CD4-positive, alpha-beta T cell (primary cell): ENCODE measurements at regions of chr5 and their contacts with region 1.

Region 1: DNA sequence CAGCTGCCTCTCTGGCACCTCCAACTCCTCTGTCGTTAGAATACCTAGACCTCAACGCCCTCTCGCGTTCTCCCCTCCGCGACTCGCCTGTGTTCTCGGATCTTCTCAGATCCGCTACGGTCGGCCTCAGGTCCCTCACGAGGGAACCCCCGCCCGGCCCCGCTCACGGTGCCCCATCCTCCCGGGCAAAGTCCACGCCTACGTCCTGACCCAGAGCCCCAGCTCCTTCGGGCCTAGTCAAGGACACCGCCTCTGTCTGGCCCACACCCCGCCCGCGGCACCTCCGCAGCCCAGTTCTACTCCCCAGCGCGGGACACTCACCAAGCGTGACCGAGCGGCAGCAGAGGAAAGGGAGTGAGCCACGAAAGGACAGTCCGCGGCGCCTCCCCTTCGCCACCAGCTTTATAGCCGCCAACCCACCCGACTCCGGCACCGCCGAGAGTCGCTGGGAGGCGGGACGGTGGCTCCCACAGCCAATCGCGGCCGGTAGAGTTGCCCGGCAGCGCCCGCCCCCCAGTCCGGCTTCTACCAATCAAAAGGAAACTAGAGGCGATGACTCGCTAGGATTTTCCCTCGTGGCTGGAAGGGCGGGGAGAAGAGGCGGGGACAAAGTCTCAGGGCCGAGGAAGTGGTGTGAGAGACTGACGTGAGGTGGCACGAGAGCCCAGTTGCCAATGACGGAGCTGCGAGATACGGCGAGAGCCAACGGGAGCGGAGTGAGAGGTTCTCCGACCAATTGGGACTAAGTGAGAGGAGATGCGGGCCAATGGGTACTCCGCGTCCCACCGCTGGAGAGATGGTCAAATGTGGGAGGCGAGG is at the start of gene HMGCS1:
- DNase-seq: peak; percentile 93 to 100 (median 98)
- ATAC-seq: peak; percentile 87
- H3K4me3 ChIP-seq: peak within 1 kb of the TSS; percentile 88
- H3K4me3 Mint-ChIP-seq: peak within 1 kb of the TSS; percentile 95
- H3K27ac ChIP-seq: peak within 1 kb of the TSS; percentile 96 to 97
- H3K27ac Mint-ChIP-seq: peak within 1 kb of the TSS; percentile 88
- H3K4me1 ChIP-seq: peaks cover 16% of the 10 kb centered on the region
- H3K4me1 Mint-ChIP-seq: peaks cover 24% of the 10 kb centered on the region
- H3K27me3 ChIP-seq: no peaks in the 10 kb centered on the region
- H3K27me3 Mint-ChIP-seq: no peaks in the 10 kb centered on the region
- CTCF ChIP-seq: no peak
- total RNA-seq, gene HMGCS1: 43.3 to 52.7 TPM

Region 2: GRCh38 chr5:42566652-42567295 is 746.5 kb before region 1 on chr5:
- CTCF ChIA-PET with region 1: no interaction called
- POLR2A ChIA-PET with region 1: no interaction called
- intact Hi-C with region 1: no loop called
- DNase-seq: no peak
- ATAC-seq: no peak
- H3K4me3 ChIP-seq: no peak overlapping the region
- H3K4me3 Mint-ChIP-seq: no peak overlapping the region
- H3K27ac ChIP-seq: no peak overlapping the region
- H3K27ac Mint-ChIP-seq: no peak overlapping the region
- H3K4me1 ChIP-seq: no peaks in the 10 kb centered on the region
- H3K4me1 Mint-ChIP-seq: no peaks in the 10 kb centered on the region
- H3K27me3 ChIP-seq: no peaks in the 10 kb centered on the region
- H3K27me3 Mint-ChIP-seq: peaks cover 22% of the 10 kb centered on the region
- CTCF ChIP-seq: no peak

Region 3: GRCh38 chr5:42908509-42909488 is 404.4 kb before region 1 on chr5:
- CTCF ChIA-PET with region 1: interaction called, 4 read pairs
- POLR2A ChIA-PET with region 1: interaction called, 34 read pairs
- intact Hi-C with region 1: no loop called
- DNase-seq: peak; percentile 80 to 96 (median 90)
- ATAC-seq: peak; percentile 94
- H3K4me3 ChIP-seq: peak overlapping the region; percentile 68
- H3K4me3 Mint-ChIP-seq: peak overlapping the region; percentile 93
- H3K27ac ChIP-seq: no peak overlapping the region
- H3K27ac Mint-ChIP-seq: peak overlapping the region; percentile 91
- H3K4me1 ChIP-seq: peaks cover 12% of the 10 kb centered on the region
- H3K4me1 Mint-ChIP-seq: peaks cover 24% of the 10 kb centered on the region
- H3K27me3 ChIP-seq: peaks cover 4 to 16% of the 10 kb centered on the region in 2 experiments
- H3K27me3 Mint-ChIP-seq: peaks cover 15% of the 10 kb centered on the region
- CTCF ChIP-seq: peak; percentile 89

Region 4: DNA sequence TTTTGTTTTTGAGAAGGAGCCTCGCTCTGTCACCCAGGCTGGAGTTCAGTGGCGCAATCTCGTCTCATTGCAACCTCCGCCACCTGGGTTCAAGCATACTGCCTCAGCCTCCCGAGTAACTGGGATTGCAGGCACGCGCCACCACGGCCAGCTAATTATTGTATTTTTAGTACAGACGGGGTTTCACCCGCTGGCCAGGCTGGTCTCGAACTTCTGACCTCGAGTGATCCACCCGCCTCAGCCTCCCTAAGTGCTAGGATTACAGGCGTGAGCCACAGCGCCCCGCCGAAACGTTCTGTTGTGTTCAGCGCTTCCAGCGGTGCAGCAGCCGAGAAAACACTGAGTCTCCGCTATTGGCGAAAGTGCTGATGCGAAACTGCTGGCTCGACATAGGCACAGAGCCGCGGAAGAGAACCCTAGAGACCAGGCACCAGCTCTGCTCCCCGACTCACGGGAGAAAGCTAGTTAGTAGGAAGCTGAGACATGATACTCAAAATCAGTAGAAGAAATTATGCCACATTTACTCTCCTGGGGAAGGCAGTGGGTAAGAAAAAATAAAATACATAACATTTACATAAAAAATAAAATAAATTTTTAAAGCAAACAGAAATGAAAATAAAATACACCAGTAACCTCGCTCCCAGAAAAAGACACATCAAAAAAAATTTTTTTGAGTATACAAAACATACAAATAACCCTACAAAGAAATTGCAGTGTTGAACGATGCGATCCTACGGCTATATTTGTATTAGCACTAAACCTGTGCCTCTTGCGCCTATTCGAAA is 304.7 kb before region 1 on chr5:
- CTCF ChIA-PET with region 1: no interaction called
- POLR2A ChIA-PET with region 1: interaction called, 19 read pairs
- intact Hi-C with region 1: no loop called
- DNase-seq: peak; percentile 87 to 97 (median 92)
- ATAC-seq: peak; percentile 63
- H3K4me3 ChIP-seq: peak overlapping the region; percentile 82
- H3K4me3 Mint-ChIP-seq: peak overlapping the region; percentile 92
- H3K27ac ChIP-seq: peak overlapping the region; percentile 91 to 95
- H3K27ac Mint-ChIP-seq: peak overlapping the region; percentile 95
- H3K4me1 ChIP-seq: peaks cover 36% of the 10 kb centered on the region
- H3K4me1 Mint-ChIP-seq: peaks cover 42% of the 10 kb centered on the region
- H3K27me3 ChIP-seq: no peaks in the 10 kb centered on the region
- H3K27me3 Mint-ChIP-seq: no peaks in the 10 kb centered on the region
- CTCF ChIP-seq: no peak

Region 5: DNA sequence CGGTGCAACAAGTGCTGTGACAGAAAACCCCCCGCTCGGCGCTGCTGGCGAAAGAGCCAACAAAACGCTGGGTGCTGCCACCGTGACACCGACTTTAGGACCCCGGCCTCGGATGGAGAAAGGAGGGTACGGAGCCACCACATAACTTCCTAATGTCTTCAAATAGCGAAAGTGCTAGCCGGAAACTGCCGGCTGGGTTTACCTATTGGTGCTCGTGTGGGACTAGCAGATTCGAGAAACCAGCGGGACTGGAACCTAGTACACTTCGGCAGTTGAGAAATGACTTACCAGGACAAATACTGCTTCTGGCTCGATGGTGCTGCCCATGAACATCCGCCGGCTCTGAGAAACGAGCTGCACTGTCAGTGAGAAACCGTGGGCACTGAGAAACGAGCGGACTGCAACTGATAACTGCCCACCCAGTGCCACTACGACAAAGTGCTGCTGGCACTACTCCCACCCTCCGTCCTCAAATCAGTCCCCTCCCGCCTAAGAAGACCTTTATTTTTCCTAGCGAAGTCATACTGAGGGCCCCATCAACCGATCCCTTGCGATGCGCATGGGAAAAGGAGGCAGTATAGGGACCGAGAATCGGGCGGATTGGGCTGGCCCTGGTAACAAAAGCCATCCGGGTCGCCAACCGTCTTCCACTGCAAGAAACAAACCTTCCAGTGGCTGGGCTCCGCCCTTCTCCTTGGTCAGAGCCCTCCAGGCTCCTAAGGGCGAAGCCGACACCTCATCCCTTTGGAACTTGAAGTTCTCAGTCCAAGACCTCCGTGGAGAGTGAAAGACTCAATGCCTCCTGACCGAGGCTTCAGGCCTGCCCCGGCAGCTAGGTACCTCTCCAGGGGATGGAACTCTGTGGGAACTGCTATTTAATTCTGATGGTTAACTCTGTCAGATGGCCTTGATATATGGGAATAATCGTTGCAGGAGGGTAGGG is 246.2 kb before region 1 on chr5:
- CTCF ChIA-PET with region 1: no interaction called
- POLR2A ChIA-PET with region 1: interaction called, 43 read pairs
- intact Hi-C with region 1: loop called in 1 of 2 experiments (anchors 2 kb)
- DNase-seq: peak; percentile 84 to 94 (median 90)
- ATAC-seq: peak; percentile 45
- H3K4me3 ChIP-seq: peak overlapping the region; percentile 78
- H3K4me3 Mint-ChIP-seq: peak overlapping the region; percentile 97
- H3K27ac ChIP-seq: peak overlapping the region; percentile 97 to 98
- H3K27ac Mint-ChIP-seq: peak overlapping the region; percentile 96
- H3K4me1 ChIP-seq: peaks cover 55% of the 10 kb centered on the region
- H3K4me1 Mint-ChIP-seq: peaks cover 49% of the 10 kb centered on the region
- H3K27me3 ChIP-seq: no peaks in the 10 kb centered on the region
- H3K27me3 Mint-ChIP-seq: no peaks in the 10 kb centered on the region
- CTCF ChIP-seq: no peak

Region 6: DNA sequence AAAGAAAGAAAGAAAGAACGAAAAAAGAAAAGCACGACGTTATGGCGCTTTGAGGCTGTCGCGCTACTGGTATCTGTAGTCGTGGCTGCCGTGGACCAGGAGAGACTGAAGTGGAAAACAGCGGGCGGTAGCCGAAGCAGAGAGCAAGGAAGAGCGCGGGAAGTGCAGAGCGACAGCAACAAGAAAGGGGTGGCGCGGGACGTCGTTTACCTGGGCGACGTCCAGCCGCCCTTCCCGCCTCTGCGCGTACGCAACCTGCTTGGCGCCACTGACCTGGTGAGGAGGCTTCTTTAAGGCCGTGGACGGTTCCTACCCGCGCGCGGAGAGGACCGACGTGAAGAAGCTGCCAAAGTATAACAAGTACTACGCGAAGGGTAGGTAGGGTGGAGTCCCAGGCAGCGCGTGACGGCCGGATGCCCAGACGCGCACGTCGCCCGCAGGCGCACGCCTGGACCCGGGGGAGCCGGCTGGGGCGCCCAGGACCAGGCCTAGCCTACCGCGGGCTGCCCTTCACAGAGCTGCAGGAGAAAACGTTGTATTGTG is 83.6 kb after region 1 on chr5:
- CTCF ChIA-PET with region 1: no interaction called
- POLR2A ChIA-PET with region 1: interaction called, 27 read pairs
- intact Hi-C with region 1: loop called in 1 of 2 experiments (anchors 1 kb)
- DNase-seq: peak; percentile 36 to 78 (median 55)
- ATAC-seq: peak; percentile 94
- H3K4me3 ChIP-seq: peak overlapping the region; percentile 86
- H3K4me3 Mint-ChIP-seq: peak overlapping the region; percentile 96
- H3K27ac ChIP-seq: peak overlapping the region; percentile 40 to 45
- H3K27ac Mint-ChIP-seq: peak overlapping the region; percentile 94
- H3K4me1 ChIP-seq: peaks cover 14% of the 10 kb centered on the region
- H3K4me1 Mint-ChIP-seq: peaks cover 32% of the 10 kb centered on the region
- H3K27me3 ChIP-seq: no peaks in the 10 kb centered on the region
- H3K27me3 Mint-ChIP-seq: no peaks in the 10 kb centered on the region
- CTCF ChIP-seq: no peak

Region 7: DNA sequence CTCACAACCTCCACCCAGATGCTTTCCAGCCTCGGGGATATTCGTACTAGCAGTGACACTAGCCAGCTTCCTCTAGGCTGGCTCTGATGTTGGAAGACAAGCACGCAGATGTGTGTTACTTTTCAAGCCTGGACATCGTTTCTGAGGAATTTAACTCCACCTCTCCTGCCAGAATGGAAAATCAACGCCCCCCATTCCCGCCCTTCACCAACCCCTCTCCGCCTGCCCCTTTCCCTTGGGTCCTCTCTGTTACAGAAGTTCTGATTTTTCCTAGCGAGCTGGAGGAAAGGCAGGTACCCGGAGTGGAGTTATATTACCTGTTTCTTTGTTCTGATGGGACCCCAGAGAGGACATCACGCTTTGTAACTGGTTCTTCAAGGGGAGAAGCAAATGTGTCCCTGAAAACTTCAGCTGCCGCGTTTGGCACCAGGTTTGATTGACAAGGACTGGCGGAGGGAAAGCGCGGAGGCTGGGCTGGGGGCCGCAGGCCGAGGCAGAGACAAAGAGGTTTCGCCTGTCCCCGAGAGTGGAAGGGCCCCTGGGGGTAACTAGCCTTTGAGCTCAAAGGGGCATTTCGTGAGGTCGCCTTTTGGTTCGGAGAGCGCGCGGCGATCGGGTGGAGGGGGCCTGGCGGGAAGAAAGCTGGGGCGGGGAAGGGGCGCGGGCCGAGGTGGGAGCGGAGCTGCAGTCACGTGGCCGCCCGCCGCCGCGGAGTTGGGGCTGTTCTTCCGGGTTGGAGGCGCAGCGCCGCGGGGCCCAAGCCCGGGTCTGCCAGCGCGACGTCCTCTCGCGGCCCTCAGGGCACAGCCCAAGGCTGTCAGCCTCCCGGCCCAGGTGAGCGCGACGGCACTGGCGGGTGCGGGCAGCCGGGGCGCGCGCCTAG is 289.5 kb after region 1 on chr5 and contains the start of gene NNT:
- CTCF ChIA-PET with region 1: no interaction called
- POLR2A ChIA-PET with region 1: interaction called, 17 read pairs
- intact Hi-C with region 1: no loop called
- DNase-seq: peak; percentile 55 to 89 (median 72)
- ATAC-seq: peak; percentile 78
- H3K4me3 ChIP-seq: peak within 1 kb of the TSS; percentile 98
- H3K4me3 Mint-ChIP-seq: peak within 1 kb of the TSS; percentile 93
- H3K27ac ChIP-seq: peak within 1 kb of the TSS; percentile 58 to 82
- H3K27ac Mint-ChIP-seq: peak within 1 kb of the TSS; percentile 87
- H3K4me1 ChIP-seq: peaks cover 31% of the 10 kb centered on the region
- H3K4me1 Mint-ChIP-seq: peaks cover 58% of the 10 kb centered on the region
- H3K27me3 ChIP-seq: no peaks in the 10 kb centered on the region
- H3K27me3 Mint-ChIP-seq: no peaks in the 10 kb centered on the region
- CTCF ChIP-seq: no peak
- total RNA-seq, gene NNT: 22.3 to 23.5 TPM